Activated CD4-positive, alpha-beta T cell treated with anti-CD3 and anti-CD28 coated beads, Interleukin-2, amount 10 ng/mL, durations not matched to agents 24 days and 14 days (primary cell): ENCODE measurements at regions of chr9 and their contacts with region 1.

Region 1: GRCh38 chr9:37027582-37028419 is 6.3 kb downstream of the PAX5 start:
- DNase-seq: peak; percentile 95
- H3K4me3 Mint-ChIP-seq: peak overlapping the region; percentile 75
- H3K27ac Mint-ChIP-seq: no peak overlapping the region
- H3K4me1 Mint-ChIP-seq: peaks cover 12% of the 10 kb centered on the region
- H3K27me3 Mint-ChIP-seq: peaks cover 88% of the 10 kb centered on the region

Region 2: GRCh38 chr9:37004424-37004935 is 23.3 kb before region 1 on chr9:
- intact Hi-C with region 1: loop called (anchors 2 kb)
- DNase-seq: no peak
- H3K4me3 Mint-ChIP-seq: no peak overlapping the region
- H3K27ac Mint-ChIP-seq: no peak overlapping the region
- H3K4me1 Mint-ChIP-seq: no peaks in the 10 kb centered on the region
- H3K27me3 Mint-ChIP-seq: peaks cover 68% of the 10 kb centered on the region

Region 3: GRCh38 chr9:37079370-37080164 is 51.8 kb after region 1 on chr9:
- intact Hi-C with region 1: loop called (anchors 2 kb)
- DNase-seq: peak; percentile 97
- H3K4me3 Mint-ChIP-seq: peak overlapping the region; percentile 95
- H3K27ac Mint-ChIP-seq: peak overlapping the region; percentile 96
- H3K4me1 Mint-ChIP-seq: peaks cover 23% of the 10 kb centered on the region
- H3K27me3 Mint-ChIP-seq: peaks cover 7% of the 10 kb centered on the region